OCI-LY7 (cell line): ENCODE measurements at regions of chr1 and their contacts with region 1.

Region 1: DNA sequence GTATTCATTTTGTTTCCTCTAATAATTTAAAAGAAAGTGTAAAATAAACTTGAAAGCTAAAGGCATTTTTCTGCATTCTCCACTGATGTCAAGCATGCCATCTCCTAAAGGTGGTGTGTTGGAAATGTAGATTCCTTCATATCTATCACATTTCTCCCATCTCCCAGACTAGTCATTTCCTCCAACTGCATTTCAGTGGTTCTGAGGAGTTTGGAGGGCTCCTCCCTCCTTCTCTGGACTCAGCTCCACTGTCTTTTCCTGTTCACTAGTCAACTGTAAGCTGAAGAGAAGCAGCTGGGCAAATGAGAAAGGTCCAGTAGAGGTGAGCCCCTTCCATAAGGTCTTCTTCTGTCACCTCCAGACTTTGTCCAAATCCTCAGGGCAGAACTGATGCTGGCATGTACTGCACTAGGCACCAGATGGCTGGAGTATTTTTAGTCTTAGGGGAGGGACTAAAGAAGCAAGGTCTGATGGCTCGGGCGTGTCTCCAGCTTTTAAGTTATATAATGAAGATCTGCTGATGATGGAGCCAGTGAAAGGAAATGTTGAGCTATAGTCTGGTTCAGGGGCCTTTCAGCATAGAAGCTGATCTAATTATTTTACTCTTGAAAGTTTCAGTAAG is 186.1 kb downstream of the NTNG1 start:
- DNase-seq: peak; percentile 60
- H3K4me3 ChIP-seq: no peak overlapping the region
- H3K27ac ChIP-seq: no peak overlapping the region
- H3K4me1 ChIP-seq: peaks cover 20% of the 10 kb centered on the region
- CTCF ChIP-seq: no peak

Region 2: GRCh38 chr1:106889059-106889458 is 437.9 kb before region 1 on chr1:
- CTCF ChIA-PET with region 1: no interaction called
- POLR2A ChIA-PET with region 1: no interaction called
- intact Hi-C with region 1: no loop called
- DNase-seq: no peak
- H3K4me3 ChIP-seq: no peak overlapping the region
- H3K27ac ChIP-seq: no peak overlapping the region
- H3K4me1 ChIP-seq: no peaks in the 10 kb centered on the region
- CTCF ChIP-seq: no peak

Region 3: DNA sequence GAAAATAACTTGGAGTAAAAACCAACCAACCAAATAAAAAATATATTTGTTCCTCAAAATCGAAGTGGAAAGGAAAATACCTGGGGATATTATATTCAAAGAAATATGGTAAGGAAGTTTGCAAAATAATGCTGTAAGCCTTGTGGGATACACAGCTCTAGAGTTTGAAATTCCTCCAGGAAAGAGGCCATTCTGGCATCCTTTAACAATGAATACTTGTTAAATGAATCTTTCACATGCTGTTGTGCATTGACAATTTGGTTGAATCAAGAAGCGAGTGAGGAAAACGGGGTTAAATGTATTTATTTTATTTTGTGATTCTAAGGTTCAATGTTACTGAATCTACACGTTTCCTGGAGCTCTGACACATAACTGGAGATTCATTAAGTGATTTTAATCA is 216.6 kb before region 1 on chr1:
- CTCF ChIA-PET with region 1: no interaction called
- POLR2A ChIA-PET with region 1: no interaction called
- intact Hi-C with region 1: no loop called
- DNase-seq: no peak
- H3K4me3 ChIP-seq: no peak overlapping the region
- H3K27ac ChIP-seq: no peak overlapping the region
- H3K4me1 ChIP-seq: no peaks in the 10 kb centered on the region
- CTCF ChIP-seq: no peak

Region 4: DNA sequence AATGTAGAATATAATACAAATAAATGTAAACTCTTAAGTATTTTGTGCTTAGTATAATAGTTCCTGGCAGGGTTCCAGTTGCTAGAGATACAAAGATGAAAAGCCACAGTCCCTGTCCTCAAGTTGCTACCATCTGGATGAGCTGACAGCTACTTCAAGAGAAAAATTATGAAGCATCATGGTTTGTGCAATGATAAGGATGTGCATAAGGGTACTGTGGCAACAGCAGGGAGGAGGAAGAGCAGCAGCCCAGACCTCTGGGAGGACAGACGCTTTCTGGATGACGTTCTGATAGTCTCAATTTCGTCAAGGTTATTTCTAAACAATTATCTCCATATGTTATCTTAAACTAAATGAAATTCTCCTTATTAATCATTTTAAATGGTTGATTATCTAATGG is 12.8 kb after region 1 on chr1:
- CTCF ChIA-PET with region 1: interaction called, 3 read pairs
- POLR2A ChIA-PET with region 1: interaction called, 12 read pairs
- intact Hi-C with region 1: no loop called
- DNase-seq: no peak
- H3K4me3 ChIP-seq: no peak overlapping the region
- H3K27ac ChIP-seq: no peak overlapping the region
- H3K4me1 ChIP-seq: no peaks in the 10 kb centered on the region
- CTCF ChIP-seq: no peak

Region 5: DNA sequence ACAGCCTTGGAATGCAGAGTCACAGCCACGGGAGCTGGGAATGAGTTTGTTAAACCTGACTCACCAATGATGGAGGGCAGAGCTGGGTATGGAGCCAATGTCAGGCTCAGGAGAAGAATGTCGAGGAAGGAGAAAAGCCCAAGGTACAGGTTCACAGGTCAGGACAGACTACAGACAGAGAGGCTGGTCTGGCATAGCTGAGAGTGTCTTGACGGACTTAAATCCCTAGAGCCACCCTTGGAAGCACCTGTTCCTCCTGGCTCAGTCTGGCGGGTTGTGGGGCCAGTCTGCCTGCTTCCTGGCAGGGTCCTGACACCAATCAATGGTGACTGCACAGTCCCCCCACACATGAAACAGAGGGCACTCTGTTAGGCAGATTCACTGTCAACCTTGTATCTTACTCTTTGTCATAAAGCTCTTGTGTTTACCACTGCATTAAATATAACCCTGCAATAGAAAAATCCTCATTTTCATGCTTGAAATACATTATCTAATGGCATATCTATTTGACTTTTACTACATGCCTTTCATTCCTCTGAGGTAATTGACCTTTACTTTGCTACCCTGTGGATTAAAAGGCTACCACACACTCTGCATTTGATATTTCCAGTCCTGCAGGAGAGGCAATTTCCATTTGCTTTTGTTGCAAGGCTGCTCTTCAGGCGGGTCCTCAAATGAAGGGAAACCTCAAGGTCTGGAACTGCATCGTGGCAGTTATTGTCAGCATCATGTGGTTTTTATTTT is 51.8 kb after region 1 on chr1:
- CTCF ChIA-PET with region 1: no interaction called
- POLR2A ChIA-PET with region 1: interaction called, 5 read pairs
- intact Hi-C with region 1: loop called (anchors 5 kb)
- DNase-seq: no peak
- H3K4me3 ChIP-seq: no peak overlapping the region
- H3K27ac ChIP-seq: no peak overlapping the region
- H3K4me1 ChIP-seq: peaks cover 9% of the 10 kb centered on the region
- CTCF ChIP-seq: no peak